ENCODE measurements at regions of chr6 and their contacts with region 1.

Region 1: DNA sequence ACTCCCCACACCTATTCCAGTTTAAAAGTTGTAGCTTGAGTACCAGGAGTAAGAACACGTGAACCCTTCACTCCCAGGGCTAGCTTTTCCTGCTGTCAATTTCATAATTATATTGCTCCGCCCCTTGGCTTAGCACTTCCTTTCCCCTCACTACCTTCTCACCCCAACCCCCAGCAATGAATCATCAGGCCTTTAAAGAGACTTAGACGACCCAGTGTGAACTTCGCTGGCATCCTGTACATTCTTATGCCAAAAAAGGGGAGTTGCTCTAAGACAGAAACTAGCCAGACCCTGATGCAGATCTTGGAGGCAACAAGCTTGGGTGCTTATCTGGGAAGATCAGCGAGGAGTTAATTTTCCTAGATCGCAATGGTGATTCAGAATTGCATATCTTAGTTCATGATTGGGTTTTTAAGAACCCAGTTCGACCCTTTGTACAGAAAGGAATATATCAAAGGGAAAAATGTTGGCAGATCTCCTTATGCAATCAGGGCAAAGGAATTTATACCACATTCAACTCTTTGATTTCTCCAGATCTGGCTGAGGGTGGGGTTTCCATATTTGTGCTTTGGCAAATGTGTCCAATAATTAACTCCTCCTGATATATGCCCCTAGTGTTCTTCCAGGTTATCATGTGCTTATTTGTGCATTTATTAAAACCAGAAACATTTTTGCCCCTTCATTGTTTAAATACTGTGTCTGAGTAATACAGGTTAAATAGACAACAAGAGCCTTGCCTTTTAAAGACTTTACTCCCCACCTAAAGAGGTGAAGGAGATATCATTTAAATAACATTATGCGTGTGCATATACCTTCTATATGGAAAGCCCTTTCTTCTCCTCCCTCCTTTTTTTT is 8.1 kb upstream of the ATXN1 start:
- DNase-seq: no peak
- H3K4me3 ChIP-seq: no peak overlapping the region
- H3K27ac ChIP-seq: peak overlapping the region; percentile 8 to 52
- H3K4me1 ChIP-seq: peaks cover 0 to 7% of the 10 kb centered on the region in 2 donors
- H3K27me3 ChIP-seq: no peaks in the 10 kb centered on the region
- CTCF ChIP-seq: no peak
- POLR2A ChIP-seq: no peak

Region 2: DNA sequence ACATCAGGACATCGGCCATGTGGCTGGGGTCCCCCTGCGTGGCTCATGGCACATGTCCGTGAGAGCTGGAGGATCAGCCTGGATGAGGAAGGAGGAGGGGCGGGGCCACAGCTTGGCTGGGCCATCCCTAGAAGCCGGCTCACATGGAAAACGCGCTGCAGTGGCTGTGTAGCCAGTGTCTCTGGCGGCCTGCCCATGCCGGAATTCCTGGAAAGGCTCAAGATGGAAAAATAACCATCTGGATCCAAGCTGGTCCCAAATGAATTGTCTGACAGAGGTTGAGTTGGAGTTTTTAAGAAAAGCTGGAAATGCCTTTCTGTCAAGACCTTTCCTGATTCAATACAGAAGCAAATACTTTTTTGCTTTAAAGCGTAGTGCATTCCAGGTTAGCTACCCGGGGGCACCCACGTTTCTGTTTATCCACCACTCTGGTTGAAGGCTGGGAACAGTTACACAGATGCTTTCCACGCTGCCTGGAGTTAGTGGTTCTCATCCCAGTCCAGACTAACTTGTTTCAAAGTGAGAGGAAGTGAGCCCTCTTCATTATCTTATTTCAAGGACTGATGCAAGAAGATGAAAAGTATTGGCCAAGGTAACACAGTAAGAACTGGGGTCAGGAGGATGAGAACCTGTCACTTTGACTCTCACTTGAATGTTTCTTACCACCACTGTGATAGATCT is 431.9 kb before region 1 on chr6:
- intact Hi-C with region 1: loop called (anchors 2 kb)
- DNase-seq: peak; percentile 79 to 80
- H3K4me3 ChIP-seq: no peak overlapping the region
- H3K27ac ChIP-seq: peak overlapping the region; percentile 13 to 45
- H3K4me1 ChIP-seq: peaks cover 4 to 15% of the 10 kb centered on the region in 2 donors
- H3K27me3 ChIP-seq: no peaks in the 10 kb centered on the region
- CTCF ChIP-seq: no peak
- POLR2A ChIP-seq: no peak

Measured in breast epithelium (tissue), 4 donors.